Endothelial cell of umbilical vein (primary cell): ENCODE measurements at regions of chr4 and their contacts with region 1.

Region 1: GRCh38 chr4:110087070-110087708 is 111.2 kb downstream of the ELOVL6 start:
- DNase-seq: peak; percentile 91
- H3K4me3 ChIP-seq: no peak overlapping the region
- H3K27ac ChIP-seq: no peak overlapping the region
- H3K4me1 ChIP-seq: peaks cover 35% of the 10 kb centered on the region
- H3K27me3 ChIP-seq: no peaks in the 10 kb centered on the region
- CTCF ChIP-seq: no peak
- POLR2A ChIP-seq: no peak

Region 2: DNA sequence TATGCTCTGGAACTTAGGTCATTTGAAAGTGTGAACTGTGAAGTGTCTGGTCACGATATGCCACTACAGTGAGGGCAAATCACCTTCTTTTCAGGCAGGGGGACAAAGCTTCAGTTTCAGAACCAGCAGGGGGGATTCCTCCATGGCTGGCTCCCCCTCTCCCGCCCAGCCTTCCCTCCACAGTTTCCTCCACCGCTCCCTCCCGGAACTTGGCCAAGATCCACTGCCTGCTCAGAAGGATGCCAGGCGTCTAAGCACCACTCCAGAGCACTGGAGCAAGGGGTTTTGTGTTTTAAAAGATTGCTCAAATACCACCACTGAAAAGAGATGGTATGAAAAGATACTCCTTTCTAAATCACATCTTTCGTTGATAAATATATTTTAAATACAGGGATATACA is 15.7 kb before region 1 on chr4:
- CTCF ChIA-PET with region 1: no interaction called
- POLR2A ChIA-PET with region 1: no interaction called
- dilution Hi-C with region 1: no loop called
- intact Hi-C with region 1: no loop called
- DNase-seq: no peak
- H3K4me3 ChIP-seq: no peak overlapping the region
- H3K27ac ChIP-seq: no peak overlapping the region
- H3K4me1 ChIP-seq: no peaks in the 10 kb centered on the region
- H3K27me3 ChIP-seq: no peaks in the 10 kb centered on the region
- CTCF ChIP-seq: no peak
- POLR2A ChIP-seq: no peak

Region 3: GRCh38 chr4:110104661-110105060 is 17.5 kb after region 1 on chr4:
- CTCF ChIA-PET with region 1: interaction called, 3 read pairs
- POLR2A ChIA-PET with region 1: no interaction called
- dilution Hi-C with region 1: no loop called
- intact Hi-C with region 1: loop called (anchors 2 kb)
- DNase-seq: no peak
- H3K4me3 ChIP-seq: no peak overlapping the region
- H3K27ac ChIP-seq: no peak overlapping the region
- H3K4me1 ChIP-seq: peaks cover 16% of the 10 kb centered on the region
- H3K27me3 ChIP-seq: no peaks in the 10 kb centered on the region
- CTCF ChIP-seq: no peak
- POLR2A ChIP-seq: no peak

Region 4: DNA sequence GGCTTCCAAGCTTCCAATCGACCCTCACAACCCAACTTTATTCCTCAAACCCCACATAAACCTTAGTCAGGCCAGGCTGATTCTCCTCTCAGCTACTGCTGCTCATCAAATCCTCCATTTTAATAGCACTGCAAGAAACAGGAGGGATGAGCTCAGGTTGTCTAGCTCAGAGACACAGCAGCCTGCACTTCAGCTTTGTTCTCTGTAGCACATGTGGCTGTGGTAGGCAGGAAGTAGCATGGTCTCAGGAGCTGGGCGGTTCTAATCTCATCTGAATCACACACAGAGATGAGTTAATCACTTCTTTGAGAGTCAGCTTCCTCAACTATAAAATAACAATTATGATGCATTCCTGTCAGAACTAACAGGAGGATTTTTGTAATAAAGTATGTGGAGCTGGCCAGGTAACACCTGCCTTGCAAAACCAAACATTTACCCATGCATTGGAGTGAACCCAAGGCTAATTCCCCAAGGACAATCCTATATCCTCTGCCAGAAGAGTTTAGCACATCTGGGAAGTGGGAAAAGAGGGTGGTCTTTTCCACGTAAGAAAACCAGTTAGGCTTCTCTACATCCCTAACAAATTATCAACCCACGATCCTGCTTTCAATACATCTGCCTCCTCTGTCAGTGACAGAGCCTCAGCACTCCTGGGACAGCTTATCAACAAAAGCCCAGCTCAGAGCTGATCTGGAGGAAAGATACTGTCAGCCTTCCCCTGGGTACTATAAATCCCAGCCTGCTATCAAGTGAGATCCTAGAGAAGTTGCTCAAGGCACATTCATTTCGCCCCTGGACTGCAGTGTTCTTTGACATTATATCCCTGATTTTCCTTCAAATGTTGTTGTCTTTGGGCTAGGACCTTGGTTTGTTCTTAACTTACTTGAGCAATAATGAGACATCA is 78.4 kb after region 1 on chr4:
- CTCF ChIA-PET with region 1: no interaction called
- POLR2A ChIA-PET with region 1: no interaction called
- dilution Hi-C with region 1: no loop called
- intact Hi-C with region 1: loop called (anchors 2 kb)
- DNase-seq: peak; percentile 60
- H3K4me3 ChIP-seq: no peak overlapping the region
- H3K27ac ChIP-seq: peak overlapping the region; percentile 35
- H3K4me1 ChIP-seq: peaks cover 15% of the 10 kb centered on the region
- H3K27me3 ChIP-seq: no peaks in the 10 kb centered on the region
- CTCF ChIP-seq: no peak
- POLR2A ChIP-seq: no peak

Region 5: GRCh38 chr4:110196206-110196870 is 109.1 kb after region 1 on chr4:
- CTCF ChIA-PET with region 1: interaction called, 3 read pairs
- POLR2A ChIA-PET with region 1: no interaction called
- dilution Hi-C with region 1: no loop called
- intact Hi-C with region 1: loop called (anchors 1 kb)
- DNase-seq: peak; percentile 55
- H3K4me3 ChIP-seq: peak overlapping the region; percentile 78 to 95 (median 91)
- H3K27ac ChIP-seq: peak overlapping the region; percentile 46
- H3K4me1 ChIP-seq: peaks cover 23% of the 10 kb centered on the region
- H3K27me3 ChIP-seq: no peaks in the 10 kb centered on the region
- CTCF ChIP-seq: no peak
- POLR2A ChIP-seq: peak; percentile 20

Region 6: DNA sequence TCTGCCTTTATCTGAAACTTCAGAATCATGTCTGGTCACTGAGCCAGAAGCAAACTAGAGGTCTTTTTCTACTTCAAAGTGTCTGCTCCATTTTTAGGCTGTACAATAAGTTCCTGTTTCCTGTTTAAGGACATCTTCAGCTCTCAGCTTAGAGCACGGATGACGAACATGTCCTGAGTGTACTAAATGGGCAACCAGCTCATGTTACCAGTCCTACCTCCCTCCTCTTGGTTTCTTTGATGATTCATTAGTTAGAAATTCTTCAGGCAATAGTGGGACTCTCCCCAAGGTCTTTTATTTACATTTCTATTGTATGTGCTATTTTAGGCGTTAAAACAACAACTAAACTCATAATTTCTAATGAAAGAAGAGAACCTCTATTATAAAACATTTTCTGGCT is 446.8 kb after region 1 on chr4:
- CTCF ChIA-PET with region 1: no interaction called
- POLR2A ChIA-PET with region 1: no interaction called
- dilution Hi-C with region 1: no loop called
- intact Hi-C with region 1: loop called (anchors 5 kb)
- DNase-seq: peak; percentile 94
- H3K4me3 ChIP-seq: peak overlapping the region in 1 of 3 experiments; percentile 54
- H3K27ac ChIP-seq: peak overlapping the region; percentile 94
- H3K4me1 ChIP-seq: peaks cover 38% of the 10 kb centered on the region
- H3K27me3 ChIP-seq: no peaks in the 10 kb centered on the region
- CTCF ChIP-seq: no peak
- POLR2A ChIP-seq: no peak